B cell (primary cell): ENCODE measurements at regions of chr20 and their contacts with region 1.

Region 1: GRCh38 chr20:1802385-1803060 is 92.7 kb upstream of the SIRPA start:
- DNase-seq: peak; percentile 89
- ATAC-seq: peak; percentile 67
- H3K4me3 ChIP-seq: peak overlapping the region; percentile 46 to 71 (median 67)
- H3K4me3 Mint-ChIP-seq: peak overlapping the region; percentile 89
- H3K27ac ChIP-seq: peak overlapping the region; percentile 85
- H3K27ac Mint-ChIP-seq: peak overlapping the region; percentile 88
- H3K4me1 ChIP-seq: peaks cover 22 to 28% of the 10 kb centered on the region in 2 donors
- H3K4me1 Mint-ChIP-seq: peaks cover 26% of the 10 kb centered on the region
- H3K27me3 ChIP-seq: no peaks in the 10 kb centered on the region
- H3K27me3 Mint-ChIP-seq: no peaks in the 10 kb centered on the region
- CTCF ChIP-seq: peak; percentile 84

Region 2: DNA sequence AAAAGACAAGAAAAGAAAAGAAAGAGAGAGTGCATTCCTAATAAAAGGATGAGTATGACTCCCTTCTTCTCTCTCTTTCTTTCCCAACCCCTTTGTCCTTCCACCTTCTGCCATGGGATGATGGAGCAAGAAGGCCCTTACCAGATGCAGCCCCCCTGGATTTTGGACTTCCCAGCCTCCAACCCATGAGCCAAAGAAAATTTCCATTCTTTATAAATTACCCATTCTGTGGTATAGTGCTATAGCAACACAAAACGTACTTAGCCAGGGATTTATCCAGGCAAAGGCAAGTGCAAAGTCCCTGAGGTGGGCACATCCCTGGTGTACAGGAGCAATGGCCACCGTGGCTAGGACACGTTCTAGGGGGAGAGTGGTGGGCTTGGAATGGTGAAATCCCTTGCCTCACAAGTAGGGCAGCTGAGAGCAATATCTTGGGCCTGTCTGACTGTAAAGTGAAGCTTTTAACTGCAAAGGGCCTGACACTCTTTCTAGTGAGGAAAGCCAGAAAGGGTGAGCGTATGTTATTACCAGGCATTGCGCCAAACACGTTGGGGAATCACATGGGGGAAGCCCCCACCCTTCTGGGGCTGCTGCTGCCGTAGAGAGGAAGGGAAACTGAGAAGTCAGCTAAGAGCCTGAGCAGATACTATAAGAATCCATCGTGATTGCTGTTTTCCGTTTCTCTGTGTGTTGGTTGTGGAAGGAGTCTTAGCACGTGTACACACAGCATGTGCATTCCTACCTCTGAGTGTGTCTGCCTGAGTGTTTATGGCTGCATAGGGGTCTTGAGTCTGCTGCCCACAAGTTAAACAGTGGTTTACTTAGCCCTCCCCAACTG is 42.0 kb after region 1 on chr20:
- CTCF ChIA-PET with region 1: interaction called, 37 read pairs
- POLR2A ChIA-PET with region 1: interaction called, 3 read pairs
- intact Hi-C with region 1: loop called (anchors 1 kb)
- DNase-seq: peak; percentile 91
- ATAC-seq: peak; percentile 98
- H3K4me3 ChIP-seq: peak overlapping the region in 1 of 5 experiments; percentile 9
- H3K4me3 Mint-ChIP-seq: peak overlapping the region; percentile 77
- H3K27ac ChIP-seq: peak overlapping the region; percentile 29 to 55
- H3K27ac Mint-ChIP-seq: peak overlapping the region; percentile 91
- H3K4me1 ChIP-seq: peaks cover 46 to 50% of the 10 kb centered on the region in 2 donors
- H3K4me1 Mint-ChIP-seq: peaks cover 69% of the 10 kb centered on the region
- H3K27me3 ChIP-seq: no peaks in the 10 kb centered on the region
- H3K27me3 Mint-ChIP-seq: no peaks in the 10 kb centered on the region
- CTCF ChIP-seq: no peak

Region 3: GRCh38 chr20:1894951-1895673 is 92.6 kb after region 1 on chr20 and contains the start of gene SIRPA:
- CTCF ChIA-PET with region 1: interaction called, 19 read pairs
- POLR2A ChIA-PET with region 1: interaction called, 3 read pairs
- intact Hi-C with region 1: loop called (anchors 1 kb)
- DNase-seq: peak; percentile 54
- ATAC-seq: peak; percentile 3
- H3K4me3 ChIP-seq: peak within 1 kb of the TSS; percentile 42 to 78 (median 60)
- H3K4me3 Mint-ChIP-seq: peak within 1 kb of the TSS; percentile 90
- H3K27ac ChIP-seq: no peak within 1 kb of the TSS
- H3K27ac Mint-ChIP-seq: peak within 1 kb of the TSS; percentile 82
- H3K4me1 ChIP-seq: peaks cover 41 to 50% of the 10 kb centered on the region in 2 donors
- H3K4me1 Mint-ChIP-seq: peaks cover 52% of the 10 kb centered on the region
- H3K27me3 ChIP-seq: peaks cover 0 to 10% (median 3%) of the 10 kb centered on the region in 4 experiments
- H3K27me3 Mint-ChIP-seq: peaks cover 6% of the 10 kb centered on the region
- CTCF ChIP-seq: no peak
- total RNA-seq, gene SIRPA: 10.2 TPM in 2 replicates

Region 4: GRCh38 chr20:1952737-1953530 is 150.4 kb after region 1 on chr20:
- CTCF ChIA-PET with region 1: interaction called, 29 read pairs
- POLR2A ChIA-PET with region 1: interaction called, 9 read pairs
- intact Hi-C with region 1: loop called (anchors 1 kb)
- DNase-seq: peak; percentile 48
- ATAC-seq: peak; percentile 25
- H3K4me3 ChIP-seq: peak overlapping the region in 2 of 5 experiments; percentile 4 to 42
- H3K4me3 Mint-ChIP-seq: peak overlapping the region; percentile 65
- H3K27ac ChIP-seq: peak overlapping the region; percentile 83 to 87
- H3K27ac Mint-ChIP-seq: peak overlapping the region; percentile 89
- H3K4me1 ChIP-seq: peaks cover 36 to 43% of the 10 kb centered on the region in 2 donors
- H3K4me1 Mint-ChIP-seq: peaks cover 40% of the 10 kb centered on the region
- H3K27me3 ChIP-seq: no peaks in the 10 kb centered on the region
- H3K27me3 Mint-ChIP-seq: peaks cover under 1% of the 10 kb centered on the region
- CTCF ChIP-seq: no peak

Region 5: GRCh38 chr20:2093159-2093781 is 290.7 kb after region 1 on chr20:
- CTCF ChIA-PET with region 1: interaction called, 21 read pairs
- POLR2A ChIA-PET with region 1: interaction called, 3 read pairs
- intact Hi-C with region 1: no loop called
- DNase-seq: peak; percentile 51
- ATAC-seq: no peak
- H3K4me3 ChIP-seq: no peak overlapping the region
- H3K4me3 Mint-ChIP-seq: no peak overlapping the region
- H3K27ac ChIP-seq: no peak overlapping the region
- H3K27ac Mint-ChIP-seq: no peak overlapping the region
- H3K4me1 ChIP-seq: no peaks in the 10 kb centered on the region
- H3K4me1 Mint-ChIP-seq: peaks cover 2% of the 10 kb centered on the region
- H3K27me3 ChIP-seq: peaks cover 0 to 23% (median 7%) of the 10 kb centered on the region in 4 experiments
- H3K27me3 Mint-ChIP-seq: peaks cover 46% of the 10 kb centered on the region
- CTCF ChIP-seq: peak; percentile 77

Region 6: GRCh38 chr20:2172305-2173175 is 370.0 kb after region 1 on chr20:
- CTCF ChIA-PET with region 1: interaction called, 118 read pairs
- POLR2A ChIA-PET with region 1: no interaction called
- intact Hi-C with region 1: no loop called
- DNase-seq: peak; percentile 76
- ATAC-seq: peak; percentile 69
- H3K4me3 ChIP-seq: no peak overlapping the region
- H3K4me3 Mint-ChIP-seq: peak overlapping the region; percentile 18
- H3K27ac ChIP-seq: no peak overlapping the region
- H3K27ac Mint-ChIP-seq: no peak overlapping the region
- H3K4me1 ChIP-seq: peaks cover 0 to 3% of the 10 kb centered on the region in 2 donors
- H3K4me1 Mint-ChIP-seq: peaks cover 3% of the 10 kb centered on the region
- H3K27me3 ChIP-seq: peaks cover 0 to 6% (median 1%) of the 10 kb centered on the region in 4 experiments
- H3K27me3 Mint-ChIP-seq: peaks cover 32% of the 10 kb centered on the region
- CTCF ChIP-seq: peak; percentile 88

Region 7: DNA sequence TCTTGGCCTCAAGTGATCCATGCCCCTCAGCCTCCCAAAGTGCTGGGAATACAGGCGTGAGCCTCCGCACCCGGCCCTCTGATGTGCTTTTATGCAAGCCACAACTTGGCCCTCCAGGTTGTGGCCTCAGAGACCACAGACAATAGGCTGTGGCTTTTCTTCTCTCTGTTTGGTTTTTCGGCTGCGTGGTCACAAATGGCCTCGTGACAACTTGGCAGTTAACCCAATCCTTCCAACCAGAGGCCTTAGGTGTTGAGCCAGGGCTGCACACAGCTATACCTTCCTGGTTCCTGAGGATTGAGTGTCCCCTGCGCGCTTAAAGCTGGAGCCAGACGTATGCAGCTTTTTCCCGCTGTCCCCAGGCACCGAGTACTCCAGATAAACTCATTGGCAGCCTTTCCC is 486.9 kb after region 1 on chr20:
- CTCF ChIA-PET with region 1: no interaction called
- POLR2A ChIA-PET with region 1: no interaction called
- intact Hi-C with region 1: no loop called
- DNase-seq: no peak
- ATAC-seq: no peak
- H3K4me3 ChIP-seq: no peak overlapping the region
- H3K4me3 Mint-ChIP-seq: peak overlapping the region; percentile 47
- H3K27ac ChIP-seq: no peak overlapping the region
- H3K27ac Mint-ChIP-seq: no peak overlapping the region
- H3K4me1 ChIP-seq: peaks cover 13 to 14% of the 10 kb centered on the region in 2 donors
- H3K4me1 Mint-ChIP-seq: peaks cover 25% of the 10 kb centered on the region
- H3K27me3 ChIP-seq: no peaks in the 10 kb centered on the region
- H3K27me3 Mint-ChIP-seq: no peaks in the 10 kb centered on the region
- CTCF ChIP-seq: no peak